ENCODE measurements at regions of chr3 and their contacts with region 1.

Region 1: GRCh38 chr3:69948246-69948862 is 51.2 kb upstream of the SAMMSON start:
- DNase-seq: no peak
- H3K4me3 ChIP-seq: no peak overlapping the region
- H3K27ac ChIP-seq: no peak overlapping the region
- H3K4me1 ChIP-seq: no peaks in the 10 kb centered on the region; a peak in 1 of 7 replicates
- H3K27me3 ChIP-seq: no peaks in the 10 kb centered on the region
- CTCF ChIP-seq: peak in 2 of 3 experiments; percentile 19 to 32; a peak in 2 of 4 replicates
- EP300 ChIP-seq: no peak
- POLR2A ChIP-seq: no peak
- RAD21 ChIP-seq: peak; percentile 44 to 69

Region 2: GRCh38 chr3:69921651-69922050 is 26.7 kb before region 1 on chr3:
- CTCF ChIA-PET with region 1: interaction called, 17 read pairs
- POLR2A ChIA-PET with region 1: interaction called, 3 read pairs
- DNase-seq: no peak
- H3K4me3 ChIP-seq: no peak overlapping the region
- H3K27ac ChIP-seq: no peak overlapping the region
- H3K4me1 ChIP-seq: no peaks in the 10 kb centered on the region
- H3K27me3 ChIP-seq: no peaks in the 10 kb centered on the region
- CTCF ChIP-seq: no peak
- EP300 ChIP-seq: no peak
- POLR2A ChIP-seq: no peak
- RAD21 ChIP-seq: no peak

Measured in H1 (cell line).